ENCODE measurements at regions of chr1 and their contacts with region 1.

Region 1: DNA sequence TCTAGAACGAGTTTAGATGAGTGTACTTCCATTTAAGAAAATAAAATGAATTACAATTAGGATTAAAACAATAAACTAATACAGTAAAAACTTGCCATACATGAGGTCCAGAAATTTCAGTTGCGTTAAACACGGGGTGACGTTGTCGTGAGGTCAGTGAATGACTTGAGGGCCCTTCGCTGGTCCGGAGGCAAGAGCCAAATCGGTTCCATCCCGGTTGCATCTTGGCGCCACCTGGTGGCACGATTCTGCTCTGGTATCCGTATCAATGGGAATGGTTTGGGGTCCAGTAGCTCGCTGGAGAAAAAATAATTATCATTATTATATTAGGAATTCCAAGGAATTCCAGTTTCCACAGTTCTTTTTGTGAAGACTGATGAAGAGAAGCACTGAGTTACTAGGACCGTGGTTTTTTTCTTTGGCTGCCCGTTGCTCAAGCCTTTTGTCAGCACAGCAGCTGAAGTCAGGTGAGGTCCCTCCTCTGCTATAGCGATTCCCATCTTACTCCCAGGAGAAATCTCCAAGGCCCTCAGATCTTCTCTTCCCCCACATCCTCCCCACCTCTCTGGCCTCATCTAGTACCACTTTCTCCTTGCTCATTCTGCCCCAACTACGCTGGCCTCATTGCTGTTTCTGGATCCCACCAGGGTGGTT is 161.4 kb downstream of the SLC35F3 start:
- DNase-seq: peak; percentile 67 to 88 (median 82)
- H3K4me3 ChIP-seq: no peak overlapping the region
- H3K27ac ChIP-seq: no peak overlapping the region
- H3K27me3 ChIP-seq: no peaks in the 10 kb centered on the region
- CTCF ChIP-seq: peak; percentile 64 to 94 (median 84)

Region 2: DNA sequence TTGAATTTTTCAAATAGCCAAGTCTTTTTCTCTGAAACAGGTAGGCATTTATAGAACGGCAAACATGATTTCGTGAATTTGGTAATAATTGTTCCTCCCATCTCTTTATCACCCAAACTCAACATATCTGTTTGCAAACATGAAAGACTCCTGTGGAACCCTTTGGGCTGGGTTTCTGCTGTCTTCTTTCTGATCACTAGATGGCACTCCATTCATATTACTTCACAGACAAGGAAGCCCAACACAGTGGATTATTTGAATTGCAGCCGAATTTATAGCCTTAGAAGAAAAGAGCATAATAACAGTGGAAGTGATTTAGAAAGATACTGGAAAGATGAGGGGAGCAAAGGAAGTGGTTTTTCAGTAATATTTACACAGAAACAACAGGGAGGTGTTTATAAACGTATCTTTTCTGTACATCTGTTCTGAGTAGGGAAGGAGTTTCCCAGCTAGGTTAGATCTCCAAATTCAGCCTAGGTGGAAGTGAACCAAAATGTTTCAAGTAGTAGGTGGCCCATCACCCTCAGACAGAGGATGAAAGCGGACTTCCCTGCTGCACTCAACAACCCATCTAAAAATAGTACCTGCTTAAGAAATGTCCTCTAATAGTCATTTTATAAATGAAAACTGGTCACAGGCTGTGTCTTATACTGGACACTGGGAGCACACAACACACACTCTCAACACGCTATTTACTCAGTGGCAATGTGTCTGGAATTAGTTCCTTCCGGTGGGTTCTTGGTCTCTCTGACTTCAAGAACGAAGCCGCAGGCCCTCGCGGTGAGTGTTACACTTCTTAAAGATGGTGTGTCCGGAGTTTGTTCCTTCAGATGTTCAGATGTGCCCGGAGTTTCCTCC is 670.8 kb before region 1 on chr1:
- intact Hi-C with region 1: loop called in 1 of 2 experiments (anchors 10 kb)
- DNase-seq: peak in 2 of 10 donors; percentile 38 to 49
- H3K4me3 ChIP-seq: no peak overlapping the region
- H3K27ac ChIP-seq: no peak overlapping the region
- H3K27me3 ChIP-seq: peaks cover 0 to 8% (median 0%) of the 10 kb centered on the region in 45 donors
- CTCF ChIP-seq: peak; percentile 33 to 89 (median 72)

Region 3: GRCh38 chr1:233440951-233441401 is 624.9 kb before region 1 on chr1:
- intact Hi-C with region 1: loop called in 1 of 2 experiments (anchors 2 kb)
- DNase-seq: peak in 2 of 10 donors; percentile 21 to 55
- H3K4me3 ChIP-seq: no peak overlapping the region
- H3K27ac ChIP-seq: peak overlapping the region in 1 of 59 donors; percentile 46
- H3K27me3 ChIP-seq: peaks cover 0 to 11% (median 0%) of the 10 kb centered on the region in 45 donors
- CTCF ChIP-seq: peak; percentile 34 to 87 (median 72)

Region 4: GRCh38 chr1:233477359-233477758 is 588.6 kb before region 1 on chr1:
- intact Hi-C with region 1: loop called in 1 of 2 experiments (anchors 10 kb)
- DNase-seq: no peak
- H3K4me3 ChIP-seq: no peak overlapping the region
- H3K27ac ChIP-seq: peak overlapping the region in 1 of 59 donors; percentile 15
- H3K27me3 ChIP-seq: no peaks in the 10 kb centered on the region
- CTCF ChIP-seq: peak in 50 of 56 donors; percentile 9 to 66 (median 42)

Region 5: GRCh38 chr1:233656032-233656620 is 409.8 kb before region 1 on chr1:
- intact Hi-C with region 1: no loop called
- DNase-seq: no peak
- H3K4me3 ChIP-seq: no peak overlapping the region
- H3K27ac ChIP-seq: peak overlapping the region; percentile 5 to 91 (median 69)
- H3K27me3 ChIP-seq: no peaks in the 10 kb centered on the region
- CTCF ChIP-seq: no peak

Region 6: DNA sequence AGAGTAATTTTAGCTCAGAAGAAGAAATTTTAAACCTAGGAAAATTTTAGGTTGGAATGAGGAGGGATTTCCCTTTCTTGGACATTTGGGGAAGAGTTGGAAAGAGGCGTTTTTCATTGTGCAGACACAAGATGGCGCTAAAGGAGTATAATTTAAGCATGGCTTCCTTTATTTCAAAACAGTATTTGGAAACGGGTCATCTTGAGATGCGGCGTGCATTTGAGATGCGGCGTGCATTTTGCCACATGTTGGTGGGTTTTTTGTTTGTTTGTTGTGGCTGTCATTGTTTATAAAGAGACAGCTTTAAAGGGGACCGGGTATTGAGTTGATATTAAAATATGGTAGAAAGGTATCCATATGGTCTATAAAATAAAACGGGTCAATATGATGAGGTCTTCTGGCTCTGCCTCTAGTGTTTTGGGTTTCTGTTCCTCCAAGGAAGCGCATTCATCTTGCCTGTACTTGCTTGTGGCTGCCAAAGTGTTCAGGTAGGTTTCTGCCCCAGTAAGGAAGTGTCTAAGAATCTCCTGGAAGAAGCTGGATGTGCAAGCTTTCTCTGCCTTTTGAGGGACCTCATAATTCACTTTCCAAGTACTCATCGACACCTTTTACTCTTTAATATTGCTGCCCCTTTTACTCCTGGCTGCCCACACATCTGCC is 48.9 kb after region 1 on chr1:
- intact Hi-C with region 1: no loop called
- DNase-seq: peak in 4 of 10 donors; percentile 17 to 57 (median 50)
- H3K4me3 ChIP-seq: peak overlapping the region in 53 of 59 donors; percentile 3 to 55 (median 38)
- H3K27ac ChIP-seq: peak overlapping the region in 3 of 59 donors; percentile 4 to 32 (median 12)
- H3K27me3 ChIP-seq: no peaks in the 10 kb centered on the region
- CTCF ChIP-seq: peak in 55 of 56 donors; percentile 67 to 90 (median 78)